ENCODE measurements at regions of chr5 and their contacts with region 1.

Region 1: DNA sequence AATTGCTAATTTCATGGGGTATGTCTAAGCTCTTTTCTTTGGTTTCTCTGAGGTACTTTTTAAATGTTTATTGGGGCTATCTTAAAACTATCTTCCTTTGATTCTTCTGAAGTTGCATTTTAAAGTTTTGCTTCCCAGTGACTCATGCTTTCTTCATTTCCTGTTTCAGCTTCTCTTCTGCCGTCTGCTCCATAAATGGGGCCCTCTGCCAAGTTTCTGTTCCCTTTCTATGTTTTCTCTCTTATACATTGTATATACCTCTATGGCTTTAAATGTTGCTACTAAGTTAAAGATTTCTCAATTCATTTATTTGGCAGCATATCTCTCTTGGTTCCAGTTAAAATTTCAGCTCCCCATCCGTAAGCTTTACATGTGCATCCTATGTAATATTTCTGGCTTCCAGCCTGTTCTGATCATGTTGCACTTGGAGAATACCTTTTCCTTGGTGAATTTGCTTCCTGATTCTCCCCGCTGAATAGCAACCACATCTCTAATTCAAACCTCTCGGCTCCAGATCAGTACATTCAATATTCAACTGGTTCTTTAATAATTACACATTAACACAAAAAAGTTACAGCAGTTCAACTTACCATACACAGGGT is 125.3 kb downstream of the ST8SIA4 start:
- DNase-seq: no peak
- ATAC-seq: peak; percentile 67
- H3K4me3 ChIP-seq: no peak overlapping the region
- H3K4me3 Mint-ChIP-seq: peak overlapping the region in 6 of 10 donors; percentile 1 to 66 (median 20)
- H3K27ac ChIP-seq: no peak overlapping the region
- H3K27ac Mint-ChIP-seq: peak overlapping the region in 4 of 9 donors; percentile 8 to 70 (median 20)
- H3K4me1 ChIP-seq: peaks cover 3 to 13% of the 10 kb centered on the region in 2 donors
- H3K4me1 Mint-ChIP-seq: peaks cover 24 to 42% (median 35%) of the 10 kb centered on the region in 7 donors
- H3K27me3 ChIP-seq: no peaks in the 10 kb centered on the region
- H3K27me3 Mint-ChIP-seq: no peaks in the 10 kb centered on the region

Region 2: DNA sequence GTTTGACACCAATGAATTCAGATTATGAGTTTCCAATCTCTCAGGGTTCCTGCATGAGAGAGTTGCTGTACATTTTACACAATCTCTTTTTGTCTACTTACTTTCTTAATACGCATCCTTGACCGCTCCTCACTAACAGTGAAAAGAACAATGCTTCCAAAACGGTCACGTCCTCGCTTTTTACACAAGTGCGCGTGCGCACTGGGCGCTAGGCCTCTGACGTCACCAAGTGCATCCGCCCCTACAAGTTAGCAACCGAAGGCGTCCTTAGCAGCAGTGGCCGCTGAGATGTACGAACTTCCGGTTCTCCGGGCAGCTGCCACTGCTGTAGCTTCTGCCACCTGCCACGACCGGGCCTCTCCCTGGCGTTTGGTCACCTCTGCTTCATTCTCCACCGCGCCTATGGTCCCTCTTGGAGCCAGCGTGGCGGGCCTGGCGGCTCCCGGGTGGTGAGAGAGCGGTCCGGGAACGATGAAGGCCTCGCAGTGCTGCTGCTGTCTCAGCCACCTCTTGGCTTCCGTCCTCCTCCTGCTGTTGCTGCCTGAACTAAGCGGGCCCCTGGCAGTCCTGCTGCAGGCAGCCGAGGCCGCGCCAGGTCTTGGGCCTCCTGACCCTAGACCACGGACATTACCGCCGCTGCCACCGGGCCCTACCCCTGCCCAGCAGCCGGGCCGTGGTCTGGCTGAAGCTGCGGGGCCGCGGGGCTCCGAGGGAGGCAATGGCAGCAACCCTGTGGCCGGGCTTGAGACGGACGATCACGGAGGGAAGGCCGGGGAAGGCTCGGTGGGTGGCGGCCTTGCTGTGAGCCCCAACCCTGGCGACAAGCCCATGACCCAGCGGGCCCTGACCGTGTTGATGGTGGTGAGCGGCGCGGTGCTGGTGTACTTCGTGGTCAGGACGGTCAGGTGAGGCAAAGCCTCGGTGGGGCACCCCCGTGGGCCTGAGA is 242.4 kb before region 1 on chr5 and contains the start of gene FAM174A:
- CTCF ChIA-PET with region 1: no interaction called
- POLR2A ChIA-PET with region 1: no interaction called
- intact Hi-C with region 1: loop called (anchors 5 kb)
- DNase-seq: peak; percentile 88 to 96 (median 95)
- ATAC-seq: peak; percentile 91
- H3K4me3 ChIP-seq: peak within 1 kb of the TSS; percentile 88
- H3K4me3 Mint-ChIP-seq: peak within 1 kb of the TSS; percentile 84 to 100 (median 96)
- H3K27ac ChIP-seq: peak within 1 kb of the TSS; percentile 82
- H3K27ac Mint-ChIP-seq: peak within 1 kb of the TSS; percentile 81 to 100 (median 97)
- H3K4me1 ChIP-seq: peaks cover 10 to 11% of the 10 kb centered on the region in 2 donors
- H3K4me1 Mint-ChIP-seq: peaks cover 15 to 51% (median 33%) of the 10 kb centered on the region in 7 donors
- H3K27me3 ChIP-seq: no peaks in the 10 kb centered on the region
- H3K27me3 Mint-ChIP-seq: peaks cover 0 to 15% (median 0%) of the 10 kb centered on the region in 5 donors
- total RNA-seq, gene FAM174A: 4.6 to 10.7 (median 6.0) TPM

Region 3: GRCh38 chr5:100827481-100827889 is 49.7 kb after region 1 on chr5:
- CTCF ChIA-PET with region 1: no interaction called
- POLR2A ChIA-PET with region 1: no interaction called
- intact Hi-C with region 1: loop called in 1 of 2 experiments (anchors 5 kb)
- DNase-seq: no peak
- ATAC-seq: no peak
- H3K4me3 ChIP-seq: no peak overlapping the region
- H3K4me3 Mint-ChIP-seq: no peak overlapping the region
- H3K27ac ChIP-seq: no peak overlapping the region
- H3K27ac Mint-ChIP-seq: peak overlapping the region in 3 of 9 donors; percentile 31 to 45 (median 38)
- H3K4me1 ChIP-seq: peaks cover 0 to 13% of the 10 kb centered on the region in 2 donors
- H3K4me1 Mint-ChIP-seq: peaks cover 6 to 36% (median 28%) of the 10 kb centered on the region in 7 donors
- H3K27me3 ChIP-seq: no peaks in the 10 kb centered on the region
- H3K27me3 Mint-ChIP-seq: no peaks in the 10 kb centered on the region

Region 4: DNA sequence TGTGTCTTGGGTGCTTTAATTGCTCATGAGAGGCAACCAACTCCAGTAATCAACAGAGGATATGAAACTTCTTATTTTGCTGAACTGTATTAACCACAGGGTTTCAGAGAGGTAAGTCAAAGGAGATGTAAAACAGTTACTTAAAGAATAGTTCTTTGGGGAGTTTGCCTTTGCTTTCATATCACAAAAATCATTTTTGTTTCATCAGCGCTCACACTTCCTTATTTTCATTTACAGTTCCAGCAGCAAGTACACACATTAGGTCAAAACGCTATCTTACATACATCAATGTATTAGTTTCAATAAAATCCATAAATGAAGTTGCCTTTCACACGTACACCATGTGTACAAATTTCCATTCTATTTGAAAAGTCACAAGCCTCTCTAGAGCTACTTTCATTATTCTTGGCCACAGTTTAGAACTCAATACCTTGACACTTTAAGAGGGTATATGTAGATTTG is 75.2 kb after region 1 on chr5:
- CTCF ChIA-PET with region 1: no interaction called
- POLR2A ChIA-PET with region 1: no interaction called
- intact Hi-C with region 1: loop called in 1 of 2 experiments (anchors 2 kb)
- DNase-seq: peak in 2 of 9 donors; percentile 5 to 6
- ATAC-seq: peak; percentile 76
- H3K4me3 ChIP-seq: no peak overlapping the region
- H3K4me3 Mint-ChIP-seq: peak overlapping the region in 8 of 10 donors; percentile 22 to 87 (median 53)
- H3K27ac ChIP-seq: no peak overlapping the region
- H3K27ac Mint-ChIP-seq: peak overlapping the region in 8 of 9 donors; percentile 30 to 97 (median 64)
- H3K4me1 ChIP-seq: peaks cover 9 to 11% of the 10 kb centered on the region in 2 donors
- H3K4me1 Mint-ChIP-seq: peaks cover 28 to 45% (median 41%) of the 10 kb centered on the region in 7 donors
- H3K27me3 ChIP-seq: no peaks in the 10 kb centered on the region
- H3K27me3 Mint-ChIP-seq: no peaks in the 10 kb centered on the region

Region 5: GRCh38 chr5:101045689-101046088 is 267.9 kb after region 1 on chr5:
- CTCF ChIA-PET with region 1: no interaction called
- POLR2A ChIA-PET with region 1: no interaction called
- intact Hi-C with region 1: loop called (anchors 1 to 10 kb)
- DNase-seq: peak in 5 of 9 donors; percentile 4 to 20 (median 8)
- ATAC-seq: no peak
- H3K4me3 ChIP-seq: no peak overlapping the region
- H3K4me3 Mint-ChIP-seq: no peak overlapping the region
- H3K27ac ChIP-seq: no peak overlapping the region
- H3K27ac Mint-ChIP-seq: no peak overlapping the region
- H3K4me1 ChIP-seq: no peaks in the 10 kb centered on the region
- H3K4me1 Mint-ChIP-seq: peaks cover 0 to 10% (median 9%) of the 10 kb centered on the region in 7 donors
- H3K27me3 ChIP-seq: no peaks in the 10 kb centered on the region
- H3K27me3 Mint-ChIP-seq: peaks cover 0 to 2% (median 0%) of the 10 kb centered on the region in 5 donors

Region 6: GRCh38 chr5:102296178-102296817 is 1518.5 kb after region 1 on chr5 and contains the start of gene SLCO4C1:
- CTCF ChIA-PET with region 1: no interaction called
- POLR2A ChIA-PET with region 1: no interaction called
- intact Hi-C with region 1: no loop called
- DNase-seq: peak; percentile 28 to 81 (median 53)
- ATAC-seq: peak; percentile 92
- H3K4me3 ChIP-seq: peak within 1 kb of the TSS; percentile 76
- H3K4me3 Mint-ChIP-seq: peak within 1 kb of the TSS; percentile 83 to 90 (median 88)
- H3K27ac ChIP-seq: peak within 1 kb of the TSS; percentile 20
- H3K27ac Mint-ChIP-seq: peak within 1 kb of the TSS; percentile 25 to 78 (median 62)
- H3K4me1 ChIP-seq: peaks cover 0 to 5% of the 10 kb centered on the region in 2 donors
- H3K4me1 Mint-ChIP-seq: peaks cover 12 to 28% (median 23%) of the 10 kb centered on the region in 7 donors
- H3K27me3 ChIP-seq: no peaks in the 10 kb centered on the region
- H3K27me3 Mint-ChIP-seq: peaks cover 0 to 13% (median 4%) of the 10 kb centered on the region in 5 donors
- total RNA-seq, gene SLCO4C1: 0.05 to 3.7 (median 0.56) TPM